MCF 10A (cell line): ENCODE measurements at regions of chr9 and their contacts with region 1.

Region 1: GRCh38 chr9:70111042-70111602 is 67.5 kb downstream of the MAMDC2 start:
- DNase-seq: peak; percentile 79
- H3K4me3 Mint-ChIP-seq: no peak overlapping the region
- H3K27ac Mint-ChIP-seq: no peak overlapping the region
- H3K4me1 Mint-ChIP-seq: peaks cover 30% of the 10 kb centered on the region
- H3K27me3 Mint-ChIP-seq: no peaks in the 10 kb centered on the region
- CTCF ChIP-seq: peak; percentile 80

Region 2: GRCh38 chr9:69421908-69422801 is 689.0 kb before region 1 on chr9:
- CTCF ChIA-PET with region 1: interaction called, 5 read pairs
- POLR2A ChIA-PET with region 1: no interaction called
- intact Hi-C with region 1: loop called (anchors 5 kb)
- DNase-seq: peak; percentile 71
- H3K4me3 Mint-ChIP-seq: no peak overlapping the region
- H3K27ac Mint-ChIP-seq: no peak overlapping the region
- H3K4me1 Mint-ChIP-seq: no peaks in the 10 kb centered on the region
- H3K27me3 Mint-ChIP-seq: peaks cover 26% of the 10 kb centered on the region
- CTCF ChIP-seq: peak; percentile 78

Region 3: DNA sequence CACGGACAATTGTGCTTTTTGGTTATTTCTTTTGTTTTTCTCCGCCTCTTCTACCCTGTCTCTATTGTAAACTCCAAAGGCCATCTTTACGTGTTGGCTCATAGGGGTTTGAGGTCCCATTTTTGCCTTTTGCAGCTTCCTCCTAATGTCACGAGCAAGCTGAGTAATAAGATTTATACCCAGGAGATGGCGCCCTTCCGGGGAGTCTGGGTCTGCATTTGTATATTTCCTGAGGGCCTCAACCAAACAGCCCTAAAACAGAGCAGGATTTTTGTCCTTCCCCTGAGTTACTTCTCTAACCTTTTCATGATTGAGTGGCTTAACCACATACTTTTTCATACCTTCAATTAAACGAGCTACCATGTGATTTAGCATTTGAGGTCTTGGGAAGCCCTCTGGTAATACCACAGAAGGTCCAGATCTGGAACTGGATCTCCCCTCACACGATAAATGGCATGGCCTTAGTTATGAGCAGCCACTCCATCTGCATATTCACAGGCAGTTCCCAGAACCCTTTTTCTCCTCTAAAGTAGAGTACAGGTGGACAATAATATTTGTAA is 301.7 kb before region 1 on chr9:
- CTCF ChIA-PET with region 1: no interaction called
- POLR2A ChIA-PET with region 1: no interaction called
- intact Hi-C with region 1: no loop called
- DNase-seq: peak; percentile 40
- H3K4me3 Mint-ChIP-seq: no peak overlapping the region
- H3K27ac Mint-ChIP-seq: no peak overlapping the region
- H3K4me1 Mint-ChIP-seq: no peaks in the 10 kb centered on the region
- H3K27me3 Mint-ChIP-seq: peaks cover 16% of the 10 kb centered on the region
- CTCF ChIP-seq: no peak

Region 4: GRCh38 chr9:69919461-69920061 is 191.6 kb before region 1 on chr9:
- CTCF ChIA-PET with region 1: interaction called, 34 read pairs
- POLR2A ChIA-PET with region 1: no interaction called
- intact Hi-C with region 1: no loop called
- DNase-seq: peak; percentile 66
- H3K4me3 Mint-ChIP-seq: no peak overlapping the region
- H3K27ac Mint-ChIP-seq: no peak overlapping the region
- H3K4me1 Mint-ChIP-seq: no peaks in the 10 kb centered on the region
- H3K27me3 Mint-ChIP-seq: peaks cover 27% of the 10 kb centered on the region
- CTCF ChIP-seq: peak; percentile 57

Region 5: DNA sequence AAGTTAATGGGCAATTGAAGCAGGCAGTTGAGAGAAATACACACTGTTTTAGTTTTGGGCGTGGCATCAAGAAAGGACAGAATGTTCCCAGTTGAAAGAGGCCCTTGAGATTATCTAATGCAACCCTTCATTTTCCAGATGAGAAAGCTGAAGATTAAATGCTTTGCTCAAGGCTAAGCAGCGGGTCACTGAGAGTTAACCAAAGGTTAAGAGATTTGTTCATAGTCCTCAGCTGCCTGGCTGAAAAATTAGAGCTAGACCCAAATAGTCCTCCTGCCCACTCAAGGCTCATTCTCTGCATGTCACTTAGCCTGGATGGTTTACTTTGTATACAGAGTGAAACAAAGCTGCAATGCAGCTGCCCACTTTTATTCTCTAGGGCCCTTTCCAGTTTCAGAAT is 114.2 kb before region 1 on chr9:
- CTCF ChIA-PET with region 1: interaction called, 19 read pairs
- POLR2A ChIA-PET with region 1: interaction called, 3 read pairs
- intact Hi-C with region 1: no loop called
- DNase-seq: peak; percentile 51
- H3K4me3 Mint-ChIP-seq: no peak overlapping the region
- H3K27ac Mint-ChIP-seq: peak overlapping the region; percentile 10
- H3K4me1 Mint-ChIP-seq: peaks cover 19% of the 10 kb centered on the region
- H3K27me3 Mint-ChIP-seq: no peaks in the 10 kb centered on the region
- CTCF ChIP-seq: no peak

Region 6: GRCh38 chr9:70080481-70081119 is 30.5 kb before region 1 on chr9:
- CTCF ChIA-PET with region 1: interaction called, 38 read pairs
- POLR2A ChIA-PET with region 1: no interaction called
- intact Hi-C with region 1: no loop called
- DNase-seq: peak; percentile 65
- H3K4me3 Mint-ChIP-seq: no peak overlapping the region
- H3K27ac Mint-ChIP-seq: peak overlapping the region; percentile 20
- H3K4me1 Mint-ChIP-seq: peaks cover 25% of the 10 kb centered on the region
- H3K27me3 Mint-ChIP-seq: no peaks in the 10 kb centered on the region
- CTCF ChIP-seq: no peak

Region 7: GRCh38 chr9:70130272-70130671 is 19.1 kb after region 1 on chr9:
- CTCF ChIA-PET with region 1: interaction called, 80 read pairs
- POLR2A ChIA-PET with region 1: no interaction called
- intact Hi-C with region 1: no loop called
- DNase-seq: no peak
- H3K4me3 Mint-ChIP-seq: no peak overlapping the region
- H3K27ac Mint-ChIP-seq: no peak overlapping the region
- H3K4me1 Mint-ChIP-seq: peaks cover 13% of the 10 kb centered on the region
- H3K27me3 Mint-ChIP-seq: no peaks in the 10 kb centered on the region
- CTCF ChIP-seq: no peak